H1 (cell line): ENCODE measurements at regions of chr14 and their contacts with region 1.

Region 1: GRCh38 chr14:68718023-68718995 is 74.6 kb downstream of the ZFP36L1 start:
- DNase-seq: no peak
- H3K4me3 ChIP-seq: no peak overlapping the region
- H3K27ac ChIP-seq: no peak overlapping the region
- H3K4me1 ChIP-seq: no peaks in the 10 kb centered on the region; a peak in 1 of 7 replicates
- H3K27me3 ChIP-seq: no peaks in the 10 kb centered on the region; a peak in 2 of 7 replicates
- CTCF ChIP-seq: peak; percentile 53 to 77 (median 65)
- EP300 ChIP-seq: no peak
- POLR2A ChIP-seq: no peak
- RAD21 ChIP-seq: peak; percentile 36 to 55; a peak in 3 of 4 replicates

Region 2: GRCh38 chr14:68669603-68670373 is 48.5 kb before region 1 on chr14:
- CTCF ChIA-PET with region 1: no interaction called
- POLR2A ChIA-PET with region 1: no interaction called
- DNase-seq: no peak
- H3K4me3 ChIP-seq: no peak overlapping the region
- H3K27ac ChIP-seq: no peak overlapping the region
- H3K4me1 ChIP-seq: no peaks in the 10 kb centered on the region; a peak in 1 of 7 replicates
- H3K27me3 ChIP-seq: no peaks in the 10 kb centered on the region
- CTCF ChIP-seq: no peak
- EP300 ChIP-seq: no peak
- POLR2A ChIP-seq: no peak
- RAD21 ChIP-seq: no peak

Region 3: DNA sequence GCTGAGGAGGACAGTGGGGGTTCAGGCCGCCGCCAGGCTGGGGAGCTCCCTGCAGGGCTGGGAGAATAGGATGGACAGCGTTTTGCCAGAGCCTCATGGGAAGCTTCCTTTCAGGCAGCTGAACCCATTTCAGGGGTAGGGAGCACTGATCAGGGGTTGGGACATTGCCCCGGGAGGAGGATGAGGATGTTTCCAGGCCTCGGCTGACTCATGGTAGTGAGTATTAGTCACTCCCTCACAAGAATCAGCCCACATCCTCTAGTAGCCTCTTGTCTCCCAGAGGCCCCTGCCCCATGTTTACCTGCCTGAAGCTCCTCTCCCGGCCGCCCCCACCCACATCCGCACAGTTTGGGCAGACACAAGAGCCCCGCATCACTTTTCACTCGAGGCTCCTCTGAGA is 15.2 kb before region 1 on chr14:
- CTCF ChIA-PET with region 1: interaction called, 10 read pairs
- POLR2A ChIA-PET with region 1: no interaction called
- DNase-seq: no peak
- H3K4me3 ChIP-seq: no peak overlapping the region
- H3K27ac ChIP-seq: no peak overlapping the region
- H3K4me1 ChIP-seq: 0 out of 7 replicates have a peak, but pooled peaks cover 0 to 3% (median 1%) of the 10 kb centered on the region in 4 experiments
- H3K27me3 ChIP-seq: no peaks in the 10 kb centered on the region
- CTCF ChIP-seq: no peak
- EP300 ChIP-seq: no peak
- POLR2A ChIP-seq: no peak
- RAD21 ChIP-seq: no peak

Region 4: DNA sequence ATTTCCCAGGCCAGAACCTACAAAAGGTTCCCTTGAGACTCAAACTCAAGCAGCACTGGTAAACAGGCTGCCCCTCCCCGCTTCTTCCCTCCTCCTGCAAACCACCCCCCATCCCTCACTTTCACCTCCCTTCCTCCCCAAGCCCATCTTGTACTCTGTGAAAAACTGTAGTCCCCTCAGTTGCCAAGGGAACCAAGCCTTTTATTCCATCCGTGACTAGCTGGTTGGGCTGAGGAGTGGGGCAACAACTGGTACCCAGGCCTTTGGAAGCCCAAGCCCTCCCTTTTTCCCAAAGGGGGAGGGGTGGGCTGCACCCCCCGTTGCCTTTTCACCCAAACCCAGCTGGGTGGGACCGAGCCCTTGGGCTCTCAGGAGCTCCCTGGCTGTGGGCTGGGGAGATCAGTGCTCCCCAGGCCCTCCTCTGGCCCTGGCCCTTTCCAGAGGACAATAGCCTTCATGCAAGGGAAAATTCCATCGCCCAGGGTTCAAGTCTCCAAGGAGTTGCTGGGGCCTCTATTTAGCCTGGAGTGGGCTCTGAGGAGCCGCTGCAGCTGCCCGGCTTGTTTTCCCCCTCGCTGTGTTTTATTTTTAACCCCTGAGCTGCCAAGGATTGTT is 12.6 kb after region 1 on chr14:
- CTCF ChIA-PET with region 1: interaction called, 50 read pairs
- POLR2A ChIA-PET with region 1: interaction called, 3 read pairs
- DNase-seq: peak in 1 of 2 experiments; percentile 63
- H3K4me3 ChIP-seq: peak overlapping the region in 3 of 4 experiments; percentile 4 to 42 (median 26); a peak in 4 of 8 replicates
- H3K27ac ChIP-seq: no peak overlapping the region; the same call in 1 of the 2 replicates
- H3K4me1 ChIP-seq: peaks cover 4 to 12% (median 10%) of the 10 kb centered on the region in 4 experiments; a peak in 6 of 7 replicates
- H3K27me3 ChIP-seq: no peaks in the 10 kb centered on the region
- CTCF ChIP-seq: no peak
- EP300 ChIP-seq: no peak
- POLR2A ChIP-seq: no peak
- RAD21 ChIP-seq: no peak; a peak in 1 of 4 replicates

Region 5: DNA sequence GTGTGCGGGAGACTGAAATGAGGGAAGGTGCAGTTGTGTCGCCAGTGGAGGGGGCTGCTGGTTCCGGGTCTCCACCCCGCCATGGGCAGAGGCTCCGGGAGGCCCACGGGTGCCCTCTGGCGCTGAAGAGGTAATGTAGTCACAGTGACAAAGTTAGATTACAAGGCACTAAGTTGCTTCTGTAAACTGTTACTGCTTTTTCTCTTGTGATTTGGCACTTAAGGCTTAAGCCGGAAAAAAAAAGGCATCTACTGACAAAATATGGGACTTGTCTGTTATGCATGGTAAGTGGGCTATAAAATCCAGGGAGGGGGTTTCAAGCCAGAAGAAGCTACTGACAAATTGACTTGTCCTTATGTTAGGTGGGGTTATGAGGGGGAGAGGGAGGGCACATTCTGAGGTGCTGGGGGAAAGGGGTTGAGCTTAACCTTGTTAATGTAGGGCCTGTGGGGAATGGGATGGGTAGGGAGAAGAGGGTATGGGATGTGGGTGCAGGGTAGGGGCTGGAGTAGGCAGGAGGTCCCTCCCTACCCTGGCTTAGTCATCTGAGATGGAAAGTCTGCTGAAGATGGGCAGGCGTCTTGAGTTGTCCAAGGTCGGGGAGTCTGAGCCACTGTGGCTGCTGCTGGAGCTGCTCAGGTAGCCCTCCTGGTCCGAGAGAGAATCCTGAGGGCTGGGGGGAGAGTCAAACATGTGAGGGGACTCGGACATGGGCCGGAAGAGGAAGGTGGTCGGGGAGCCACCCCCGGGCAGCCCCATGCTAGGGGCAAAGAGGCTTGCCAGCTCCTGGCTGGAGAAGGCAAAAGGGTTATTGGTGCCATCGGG is 70.9 kb after region 1 on chr14:
- CTCF ChIA-PET with region 1: interaction called, 16 read pairs
- POLR2A ChIA-PET with region 1: interaction called, 10 read pairs
- DNase-seq: peak in 1 of 2 experiments; percentile 71
- H3K4me3 ChIP-seq: peak overlapping the region in 3 of 4 experiments; percentile 9 to 91 (median 14); a peak in 3 of 8 replicates
- H3K27ac ChIP-seq: no peak overlapping the region
- H3K4me1 ChIP-seq: peaks cover 0 to 22% (median 12%) of the 10 kb centered on the region in 4 experiments; a peak in 6 of 7 replicates
- H3K27me3 ChIP-seq: no peaks in the 10 kb centered on the region
- CTCF ChIP-seq: peak; percentile 63 to 94 (median 67)
- EP300 ChIP-seq: no peak
- POLR2A ChIP-seq: no peak; a peak in 1 of 3 replicates
- RAD21 ChIP-seq: peak; percentile 71 to 79

Region 6: GRCh38 chr14:68951042-68951914 is 233.0 kb after region 1 on chr14:
- CTCF ChIA-PET with region 1: no interaction called
- POLR2A ChIA-PET with region 1: no interaction called
- DNase-seq: no peak
- H3K4me3 ChIP-seq: no peak overlapping the region
- H3K27ac ChIP-seq: no peak overlapping the region
- H3K4me1 ChIP-seq: peaks cover 0 to 10% (median 6%) of the 10 kb centered on the region in 4 experiments; a peak in 6 of 7 replicates
- H3K27me3 ChIP-seq: no peaks in the 10 kb centered on the region
- CTCF ChIP-seq: no peak
- EP300 ChIP-seq: no peak
- POLR2A ChIP-seq: no peak; a peak in 1 of 3 replicates
- RAD21 ChIP-seq: no peak